Activated naive CD4-positive, alpha-beta T cell treated with anti-CD3 and anti-CD28 coated beads for 36 hours (primary cell): ENCODE measurements at regions of chr9 and their contacts with region 1.

Region 1: DNA sequence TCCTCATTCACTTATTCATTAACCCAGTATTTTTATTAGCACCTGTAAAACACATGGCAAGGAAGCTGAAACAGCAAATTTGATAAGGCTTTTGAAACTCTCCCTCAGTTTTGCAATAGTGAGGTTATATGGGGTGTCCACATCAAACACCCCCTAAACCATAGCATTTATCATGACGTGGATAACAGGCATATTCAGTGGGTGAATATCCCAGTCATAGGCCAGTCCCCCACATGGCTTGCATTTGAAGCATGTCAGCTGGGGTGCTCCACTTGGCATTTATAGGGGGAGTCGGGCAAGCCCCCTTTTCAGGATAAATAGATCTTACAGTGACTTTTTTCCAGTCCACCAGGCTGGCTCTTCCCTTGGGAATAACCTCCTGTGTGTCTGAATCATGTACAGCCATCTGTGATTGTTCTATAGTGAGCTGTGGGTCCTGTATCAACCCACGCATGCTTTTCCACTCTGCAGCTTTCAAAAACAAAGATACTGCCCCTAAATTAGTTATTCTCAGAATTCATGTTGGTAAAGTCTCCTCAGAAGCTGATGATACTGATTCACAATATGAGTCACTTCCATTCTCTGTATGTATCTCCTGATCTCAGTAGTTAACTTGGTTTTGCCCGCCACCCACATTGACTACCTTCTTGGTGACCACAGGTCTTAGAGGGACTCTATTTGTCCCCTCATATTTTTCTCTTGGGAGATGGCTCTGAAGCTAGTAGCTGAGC is 84.4 kb upstream of the SPIN1 start:
- DNase-seq: peak; percentile 75
- H3K4me3 Mint-ChIP-seq: no peak overlapping the region
- H3K27ac Mint-ChIP-seq: no peak overlapping the region
- H3K4me1 Mint-ChIP-seq: peaks cover 23% of the 10 kb centered on the region
- H3K27me3 Mint-ChIP-seq: peaks cover 8% of the 10 kb centered on the region

Region 2: GRCh38 chr9:87707805-87708506 is 595.9 kb before region 1 on chr9:
- CTCF ChIA-PET with region 1: no interaction called
- intact Hi-C with region 1: loop called (anchors 1 kb)
- DNase-seq: no peak
- H3K4me3 Mint-ChIP-seq: no peak overlapping the region
- H3K27ac Mint-ChIP-seq: no peak overlapping the region
- H3K4me1 Mint-ChIP-seq: peaks cover 34% of the 10 kb centered on the region
- H3K27me3 Mint-ChIP-seq: peaks cover 3% of the 10 kb centered on the region

Region 3: DNA sequence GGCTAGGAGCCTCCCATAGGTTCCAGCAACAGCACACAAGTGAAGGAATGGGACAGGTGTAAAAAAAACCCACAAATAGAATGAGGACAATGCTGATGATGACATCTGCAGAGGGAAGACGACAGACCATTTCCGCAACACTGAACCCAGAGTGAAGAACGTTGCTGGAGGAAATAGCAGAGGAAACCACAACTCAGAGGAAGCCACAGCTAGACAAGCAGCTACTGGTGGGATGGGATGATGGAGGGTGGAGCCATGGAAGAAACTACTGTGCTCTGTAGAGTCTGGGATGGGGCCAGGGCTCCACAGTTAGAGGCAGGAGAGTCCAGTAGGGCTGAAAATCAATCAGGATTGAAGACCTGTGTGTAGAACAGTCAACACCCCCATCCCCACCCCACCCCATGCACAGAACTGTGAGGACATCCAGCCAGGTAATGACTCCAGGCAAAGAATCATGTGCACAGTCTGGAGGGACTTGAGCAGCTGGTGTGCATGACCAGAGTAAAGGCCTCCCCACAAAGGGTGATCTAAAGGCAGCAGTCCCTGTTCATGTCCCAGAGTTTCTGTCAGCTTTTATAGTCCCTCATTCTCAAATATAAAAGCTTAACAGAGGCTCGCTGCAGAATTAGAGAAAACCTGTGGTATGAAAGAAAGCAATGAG is 19.1 kb after region 1 on chr9:
- CTCF ChIA-PET with region 1: no interaction called
- intact Hi-C with region 1: loop called (anchors 1 kb)
- DNase-seq: peak; percentile 78
- H3K4me3 Mint-ChIP-seq: no peak overlapping the region
- H3K27ac Mint-ChIP-seq: peak overlapping the region; percentile 37
- H3K4me1 Mint-ChIP-seq: peaks cover 30% of the 10 kb centered on the region
- H3K27me3 Mint-ChIP-seq: no peaks in the 10 kb centered on the region

Region 4: GRCh38 chr9:88476491-88477271 is 172.8 kb after region 1 on chr9:
- CTCF ChIA-PET with region 1: no interaction called
- intact Hi-C with region 1: loop called (anchors 1 kb)
- DNase-seq: peak; percentile 7
- H3K4me3 Mint-ChIP-seq: no peak overlapping the region
- H3K27ac Mint-ChIP-seq: no peak overlapping the region
- H3K4me1 Mint-ChIP-seq: peaks cover 18% of the 10 kb centered on the region
- H3K27me3 Mint-ChIP-seq: no peaks in the 10 kb centered on the region

Region 5: GRCh38 chr9:88494983-88495721 is 191.3 kb after region 1 on chr9:
- CTCF ChIA-PET with region 1: no interaction called
- intact Hi-C with region 1: no loop called
- DNase-seq: no peak
- H3K4me3 Mint-ChIP-seq: no peak overlapping the region
- H3K27ac Mint-ChIP-seq: no peak overlapping the region
- H3K4me1 Mint-ChIP-seq: no peaks in the 10 kb centered on the region
- H3K27me3 Mint-ChIP-seq: no peaks in the 10 kb centered on the region

Region 6: DNA sequence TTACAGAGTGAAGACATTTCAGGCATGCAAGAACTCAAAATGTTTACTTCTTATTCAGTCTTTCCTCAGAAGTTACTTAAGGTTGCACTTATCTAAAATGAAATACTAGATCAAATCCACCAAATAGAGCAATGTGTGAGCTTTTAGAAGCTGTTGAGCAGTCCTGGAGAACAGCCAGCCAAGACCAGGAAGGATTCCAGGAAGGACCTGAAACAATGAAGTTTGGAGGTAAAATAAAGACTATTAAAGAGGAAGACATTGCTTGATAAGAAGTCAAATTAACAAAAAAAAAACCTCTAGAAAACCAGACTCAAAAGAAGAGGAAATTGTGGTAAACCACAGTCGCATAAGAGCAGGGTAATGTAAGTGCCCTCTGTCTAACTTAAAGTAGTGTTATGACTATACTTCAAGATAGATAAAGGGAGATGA is 531.2 kb after region 1 on chr9:
- CTCF ChIA-PET with region 1: no interaction called
- intact Hi-C with region 1: loop called (anchors 10 kb)
- DNase-seq: no peak
- H3K4me3 Mint-ChIP-seq: no peak overlapping the region
- H3K27ac Mint-ChIP-seq: no peak overlapping the region
- H3K4me1 Mint-ChIP-seq: peaks cover 24% of the 10 kb centered on the region
- H3K27me3 Mint-ChIP-seq: peaks cover 71% of the 10 kb centered on the region

Region 7: DNA sequence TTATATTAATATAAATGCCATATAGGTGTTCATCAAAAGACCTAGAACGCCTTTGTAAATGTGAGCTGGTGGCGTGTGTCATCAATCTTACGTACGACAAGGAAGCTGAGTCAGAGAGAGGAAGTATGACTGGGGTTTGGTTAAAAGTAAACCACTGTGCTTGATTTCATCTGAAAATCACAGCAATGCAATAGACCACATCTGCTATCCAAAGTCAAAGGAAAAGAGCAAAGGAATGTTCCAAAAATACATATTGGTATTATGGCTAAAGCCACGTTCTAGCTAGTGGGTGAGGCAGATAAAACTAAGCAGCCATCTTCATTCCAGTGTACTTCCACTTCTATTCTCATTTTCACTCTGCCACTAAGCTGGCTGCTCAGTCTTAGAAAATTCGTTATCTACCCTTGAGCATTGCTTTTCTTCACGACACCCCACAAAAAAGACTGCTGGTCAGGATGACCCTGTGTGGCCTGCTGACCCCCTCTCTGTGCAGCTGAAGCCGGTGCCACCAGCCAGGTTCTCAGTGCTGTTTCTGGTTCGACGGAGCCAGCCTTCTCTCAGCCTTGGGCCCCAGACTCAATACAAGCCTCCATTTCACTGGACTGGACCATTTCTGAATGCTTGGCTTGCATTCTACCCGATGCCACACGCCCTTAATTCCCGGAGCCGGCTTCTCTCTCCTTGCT is 850.9 kb after region 1 on chr9:
- CTCF ChIA-PET with region 1: no interaction called
- intact Hi-C with region 1: loop called (anchors 5 kb)
- DNase-seq: peak; percentile 67
- H3K4me3 Mint-ChIP-seq: no peak overlapping the region
- H3K27ac Mint-ChIP-seq: no peak overlapping the region
- H3K4me1 Mint-ChIP-seq: peaks cover 24% of the 10 kb centered on the region
- H3K27me3 Mint-ChIP-seq: peaks cover 37% of the 10 kb centered on the region